ENCODE measurements at regions of chr11 and their contacts with region 1.

Region 1: GRCh38 chr11:113896156-113896879 is 8.3 kb upstream of the HTR3B start:
- DNase-seq: peak; percentile 75
- ATAC-seq: peak; percentile 84
- H3K4me3 ChIP-seq: no peak overlapping the region
- H3K4me3 Mint-ChIP-seq: no peak overlapping the region
- H3K27ac ChIP-seq: no peak overlapping the region
- H3K27ac Mint-ChIP-seq: no peak overlapping the region
- H3K4me1 ChIP-seq: peaks cover 5 to 13% of the 10 kb centered on the region in 2 donors
- H3K4me1 Mint-ChIP-seq: peaks cover 16% of the 10 kb centered on the region
- H3K27me3 ChIP-seq: no peaks in the 10 kb centered on the region
- H3K27me3 Mint-ChIP-seq: no peaks in the 10 kb centered on the region
- CTCF ChIP-seq: peak; percentile 84

Region 2: DNA sequence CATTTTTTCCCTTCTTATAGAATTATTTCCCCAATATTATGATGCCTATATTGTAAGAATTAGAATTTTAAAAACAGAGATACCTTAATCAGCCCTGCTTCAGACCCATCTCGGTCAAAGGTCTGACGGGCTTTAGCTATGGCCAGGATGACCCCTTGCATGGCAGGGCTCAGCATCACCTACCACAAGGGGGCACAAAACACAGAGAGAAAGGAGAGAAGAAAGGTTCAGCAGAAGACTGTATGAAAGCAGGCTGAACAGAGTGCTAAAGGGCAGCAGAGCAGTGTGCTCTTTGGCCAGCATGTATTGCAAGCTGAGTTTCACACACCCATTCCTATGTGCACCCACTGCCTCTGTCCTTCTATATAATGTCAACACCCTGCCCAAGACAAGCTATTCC is 89.9 kb before region 1 on chr11:
- CTCF ChIA-PET with region 1: interaction called, 31 read pairs
- POLR2A ChIA-PET with region 1: no interaction called
- intact Hi-C with region 1: loop called (anchors 1 kb)
- DNase-seq: peak; percentile 56
- ATAC-seq: peak; percentile 70
- H3K4me3 ChIP-seq: no peak overlapping the region
- H3K4me3 Mint-ChIP-seq: no peak overlapping the region
- H3K27ac ChIP-seq: no peak overlapping the region
- H3K27ac Mint-ChIP-seq: peak overlapping the region; percentile 77
- H3K4me1 ChIP-seq: no peaks in the 10 kb centered on the region
- H3K4me1 Mint-ChIP-seq: peaks cover 4% of the 10 kb centered on the region
- H3K27me3 ChIP-seq: no peaks in the 10 kb centered on the region
- H3K27me3 Mint-ChIP-seq: no peaks in the 10 kb centered on the region
- CTCF ChIP-seq: peak; percentile 58

Region 3: DNA sequence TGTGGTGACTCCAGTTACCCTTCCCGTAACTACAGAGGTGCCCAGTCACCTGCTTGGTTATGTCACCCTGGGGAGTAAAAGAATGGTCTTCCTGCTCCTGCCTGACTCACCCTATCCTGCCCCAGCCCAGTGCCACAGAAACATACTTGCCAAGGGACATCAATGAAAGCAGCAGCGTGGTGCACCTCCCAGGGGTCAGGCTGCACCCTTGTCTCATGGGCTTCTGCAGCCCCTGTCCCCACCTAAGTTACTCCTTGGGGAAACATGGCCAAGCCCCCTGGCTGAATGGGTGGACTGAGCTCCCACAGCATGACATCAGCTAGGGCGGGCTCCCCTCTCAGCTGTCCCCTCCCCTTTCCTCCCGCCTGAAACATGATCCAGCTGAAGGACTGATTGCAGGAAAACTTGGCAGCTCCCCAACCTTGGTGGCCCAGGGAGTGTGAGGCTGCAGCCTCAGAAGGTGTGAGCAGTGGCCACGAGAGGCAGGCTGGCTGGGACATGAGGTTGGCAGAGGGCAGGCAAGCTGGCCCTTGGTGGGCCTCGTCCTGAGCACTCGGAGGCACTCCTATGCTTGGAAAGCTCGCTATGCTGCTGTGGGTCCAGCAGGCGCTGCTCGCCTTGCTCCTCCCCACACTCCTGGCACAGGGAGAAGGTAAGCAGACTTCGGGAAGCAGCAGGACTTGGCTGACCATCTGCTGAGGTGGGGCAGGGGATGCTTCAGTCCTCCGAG is 78.6 kb after region 1 on chr11 and contains the start of gene HTR3A:
- CTCF ChIA-PET with region 1: interaction called, 58 read pairs
- POLR2A ChIA-PET with region 1: interaction called, 5 read pairs
- intact Hi-C with region 1: loop called (anchors 5 kb)
- DNase-seq: peak; percentile 16
- ATAC-seq: no peak
- H3K4me3 ChIP-seq: no peak within 1 kb of the TSS
- H3K4me3 Mint-ChIP-seq: peak within 1 kb of the TSS; percentile 48
- H3K27ac ChIP-seq: peak within 1 kb of the TSS in 1 of 2 donors; percentile 29
- H3K27ac Mint-ChIP-seq: peak within 1 kb of the TSS; percentile 91
- H3K4me1 ChIP-seq: peaks cover 56 to 77% of the 10 kb centered on the region in 2 donors
- H3K4me1 Mint-ChIP-seq: peaks cover 66% of the 10 kb centered on the region
- H3K27me3 ChIP-seq: no peaks in the 10 kb centered on the region
- H3K27me3 Mint-ChIP-seq: no peaks in the 10 kb centered on the region
- CTCF ChIP-seq: no peak
- total RNA-seq, gene HTR3A: 13.8 and 16.1 TPM in 2 replicates

Region 4: DNA sequence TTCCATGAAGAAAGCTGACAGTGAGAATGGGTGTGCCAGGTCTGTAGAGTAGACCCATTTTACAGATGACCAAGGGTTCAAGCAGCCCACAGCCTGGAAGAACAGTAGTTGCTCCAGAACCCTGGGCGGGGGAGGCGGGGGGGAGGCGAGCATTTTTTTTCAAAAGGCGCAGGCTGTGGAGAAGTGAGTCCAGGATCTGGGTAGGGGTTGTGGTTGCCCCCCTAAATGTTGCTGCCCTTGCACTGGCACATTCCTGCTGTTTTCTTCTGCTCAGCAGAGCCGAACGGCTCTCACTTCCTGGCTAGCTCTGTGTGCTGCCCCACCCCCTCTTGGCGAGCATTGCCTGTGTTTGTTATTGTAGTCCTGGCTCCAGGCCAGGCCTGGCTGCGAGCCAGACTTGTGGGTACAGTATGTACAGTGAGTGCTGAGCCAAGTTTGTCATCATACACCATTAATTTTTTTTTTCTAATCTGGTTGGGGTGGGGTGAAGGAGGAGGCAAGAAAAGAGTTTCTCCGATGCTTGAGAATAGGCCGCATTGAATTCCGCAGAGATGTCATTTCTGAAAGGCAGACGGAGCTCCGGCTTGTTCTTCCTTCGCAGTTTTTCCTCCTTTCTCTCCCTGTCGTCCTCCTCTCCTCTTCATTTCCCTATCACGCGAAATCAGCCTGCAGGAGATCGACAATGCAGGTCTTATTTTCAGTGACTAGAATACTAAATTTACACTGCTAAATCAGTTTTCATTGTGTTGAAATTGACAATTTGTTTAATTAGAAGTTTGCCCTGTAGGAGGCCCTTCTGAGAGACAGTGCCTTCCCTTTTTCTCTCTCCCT is 263.7 kb after region 1 on chr11:
- CTCF ChIA-PET with region 1: interaction called, 10 read pairs
- POLR2A ChIA-PET with region 1: interaction called, 4 read pairs
- intact Hi-C with region 1: loop called (anchors 1 kb)
- DNase-seq: peak; percentile 98
- ATAC-seq: peak; percentile 93
- H3K4me3 ChIP-seq: peak overlapping the region; percentile 11 to 44 (median 24)
- H3K4me3 Mint-ChIP-seq: peak overlapping the region; percentile 73
- H3K27ac ChIP-seq: peak overlapping the region; percentile 81 to 85
- H3K27ac Mint-ChIP-seq: peak overlapping the region; percentile 90
- H3K4me1 ChIP-seq: peaks cover 68 to 69% of the 10 kb centered on the region in 2 donors
- H3K4me1 Mint-ChIP-seq: peaks cover 73% of the 10 kb centered on the region
- H3K27me3 ChIP-seq: no peaks in the 10 kb centered on the region
- H3K27me3 Mint-ChIP-seq: peaks cover 4% of the 10 kb centered on the region
- CTCF ChIP-seq: peak; percentile 33

Region 5: DNA sequence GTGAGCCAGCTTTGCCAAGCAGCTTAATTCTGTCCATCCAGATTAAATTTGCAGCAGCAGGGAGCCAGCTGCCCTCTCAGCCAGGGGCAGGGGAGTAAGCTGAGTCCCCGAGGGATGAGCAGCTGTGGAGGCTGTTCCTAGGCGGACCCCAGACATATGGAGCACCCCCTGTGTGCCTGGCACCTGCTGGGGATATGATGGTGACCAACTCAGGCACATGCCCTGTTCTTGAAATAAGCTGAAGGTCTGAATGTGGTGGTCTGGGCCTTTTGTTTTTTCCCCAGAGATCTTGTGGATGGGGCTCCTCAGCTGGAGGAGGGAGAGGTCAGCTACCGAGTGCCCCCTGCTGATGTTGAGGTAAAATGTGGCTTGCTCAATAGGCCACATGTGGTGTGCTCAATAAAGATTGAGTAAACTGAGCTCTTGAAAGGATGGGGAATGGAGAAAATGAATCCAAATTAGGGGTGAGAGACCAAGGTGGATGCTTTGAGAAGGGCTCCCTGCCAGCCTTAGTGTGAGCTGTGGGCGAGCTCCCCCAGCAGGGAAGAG is 296.6 kb after region 1 on chr11:
- CTCF ChIA-PET with region 1: interaction called, 11 read pairs
- POLR2A ChIA-PET with region 1: interaction called, 3 read pairs
- intact Hi-C with region 1: no loop called
- DNase-seq: no peak
- ATAC-seq: no peak
- H3K4me3 ChIP-seq: no peak overlapping the region
- H3K4me3 Mint-ChIP-seq: no peak overlapping the region
- H3K27ac ChIP-seq: no peak overlapping the region
- H3K27ac Mint-ChIP-seq: no peak overlapping the region
- H3K4me1 ChIP-seq: peaks cover 42 to 66% of the 10 kb centered on the region in 2 donors
- H3K4me1 Mint-ChIP-seq: peaks cover 60% of the 10 kb centered on the region
- H3K27me3 ChIP-seq: no peaks in the 10 kb centered on the region
- H3K27me3 Mint-ChIP-seq: no peaks in the 10 kb centered on the region
- CTCF ChIP-seq: no peak